Activated CD4-positive, alpha-beta memory T cell treated with anti-CD3 and anti-CD28 coated beads for 36 hours (primary cell): ENCODE measurements at regions of chr7 and their contacts with region 1.

Region 1: DNA sequence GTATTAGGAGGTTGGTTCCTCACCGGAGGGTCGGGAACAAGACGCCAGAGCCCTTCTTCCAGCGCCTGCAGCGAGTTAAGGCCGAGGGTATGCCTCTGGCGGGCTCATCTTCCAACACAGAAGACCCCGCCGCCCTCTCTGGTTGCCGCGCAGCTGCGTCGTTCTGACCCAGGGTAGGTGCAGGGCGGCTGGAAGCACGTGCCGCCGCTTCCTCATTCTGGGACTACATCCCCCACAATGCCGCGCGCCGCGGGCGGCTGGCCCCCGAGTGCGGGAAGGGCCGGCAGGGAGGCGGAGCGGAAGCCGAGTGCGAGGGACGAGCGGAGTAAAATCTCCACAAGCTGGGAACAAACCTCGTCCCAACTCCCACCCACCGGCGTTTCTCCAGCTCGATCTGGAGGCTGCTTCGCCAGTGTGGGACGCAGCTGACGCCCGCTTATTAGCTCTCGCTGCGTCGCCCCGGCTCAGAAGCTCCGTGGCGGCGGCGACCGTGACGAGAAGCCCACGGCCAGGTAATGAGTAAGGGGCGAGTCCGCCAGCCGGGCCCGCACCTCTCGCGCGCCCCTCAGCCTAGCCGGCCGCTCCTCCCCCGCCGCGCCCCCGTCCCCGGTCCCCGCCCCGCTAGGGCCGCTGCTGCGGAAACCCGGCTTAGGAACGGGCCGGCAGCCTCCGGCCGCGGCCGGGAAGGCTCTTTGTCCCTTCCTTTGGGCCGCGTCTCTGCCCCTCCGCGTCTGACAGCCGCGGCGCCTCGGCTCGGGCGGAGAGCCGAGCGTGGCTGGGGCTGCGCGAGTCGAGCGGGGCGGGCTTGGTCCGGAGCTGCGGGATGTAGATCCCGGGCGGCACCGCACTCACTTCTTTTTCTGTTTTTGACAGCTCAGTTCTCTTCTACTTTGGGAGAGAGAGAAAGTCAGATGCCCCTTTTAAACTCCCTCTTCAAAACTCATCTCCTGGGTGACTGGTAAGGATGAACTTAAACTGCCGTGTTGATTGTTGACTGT is at the start of gene CCDC126:
- DNase-seq: peak; percentile 88
- H3K4me3 Mint-ChIP-seq: peak within 1 kb of the TSS; percentile 87
- H3K27ac Mint-ChIP-seq: peak within 1 kb of the TSS; percentile 64
- H3K4me1 Mint-ChIP-seq: peaks cover 61% of the 10 kb centered on the region
- H3K27me3 Mint-ChIP-seq: no peaks in the 10 kb centered on the region
- total RNA-seq, gene CCDC126: 5.2 to 5.7 TPM

Region 2: GRCh38 chr7:22885797-22886261 is 711.6 kb before region 1 on chr7:
- CTCF ChIA-PET with region 1: no interaction called
- POLR2A ChIA-PET with region 1: no interaction called
- intact Hi-C with region 1: loop called (anchors 1 kb)
- DNase-seq: peak; percentile 81
- H3K4me3 Mint-ChIP-seq: peak overlapping the region; percentile 45
- H3K27ac Mint-ChIP-seq: peak overlapping the region; percentile 88
- H3K4me1 Mint-ChIP-seq: peaks cover 39% of the 10 kb centered on the region
- H3K27me3 Mint-ChIP-seq: no peaks in the 10 kb centered on the region

Region 3: DNA sequence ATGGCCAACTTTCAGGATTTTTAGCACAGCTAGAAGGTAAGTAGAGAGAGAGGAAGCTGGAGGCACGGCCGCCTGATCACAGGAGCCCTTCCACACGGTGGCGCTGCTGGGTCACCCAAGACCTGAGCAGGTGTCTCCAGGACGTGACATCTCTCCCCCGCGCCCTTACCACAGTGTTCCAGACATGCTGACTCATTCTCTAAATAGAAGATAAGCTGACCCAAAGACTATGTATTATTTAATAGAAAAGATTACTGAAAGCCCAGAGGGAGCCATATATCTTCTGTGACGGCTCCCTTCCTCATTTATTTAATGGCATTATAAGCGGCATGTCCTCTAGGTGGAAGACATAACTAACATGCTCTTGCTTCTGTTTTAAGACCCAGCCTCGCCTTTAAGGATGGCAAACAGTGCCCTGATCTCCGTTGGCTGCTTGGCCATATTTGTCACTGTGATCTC is 324.2 kb before region 1 on chr7:
- CTCF ChIA-PET with region 1: interaction called, 3 read pairs
- POLR2A ChIA-PET with region 1: no interaction called
- intact Hi-C with region 1: loop called (anchors 1 kb)
- DNase-seq: peak; percentile 93
- H3K4me3 Mint-ChIP-seq: peak overlapping the region; percentile 61
- H3K27ac Mint-ChIP-seq: peak overlapping the region; percentile 20
- H3K4me1 Mint-ChIP-seq: peaks cover 9% of the 10 kb centered on the region
- H3K27me3 Mint-ChIP-seq: peaks cover 3% of the 10 kb centered on the region

Region 4: GRCh38 chr7:23373151-23374004 is 224.0 kb before region 1 on chr7:
- CTCF ChIA-PET with region 1: no interaction called
- POLR2A ChIA-PET with region 1: no interaction called
- intact Hi-C with region 1: loop called (anchors 1 kb)
- DNase-seq: peak; percentile 80
- H3K4me3 Mint-ChIP-seq: peak overlapping the region; percentile 17
- H3K27ac Mint-ChIP-seq: peak overlapping the region; percentile 76
- H3K4me1 Mint-ChIP-seq: peaks cover 46% of the 10 kb centered on the region
- H3K27me3 Mint-ChIP-seq: peaks cover 15% of the 10 kb centered on the region

Region 5: DNA sequence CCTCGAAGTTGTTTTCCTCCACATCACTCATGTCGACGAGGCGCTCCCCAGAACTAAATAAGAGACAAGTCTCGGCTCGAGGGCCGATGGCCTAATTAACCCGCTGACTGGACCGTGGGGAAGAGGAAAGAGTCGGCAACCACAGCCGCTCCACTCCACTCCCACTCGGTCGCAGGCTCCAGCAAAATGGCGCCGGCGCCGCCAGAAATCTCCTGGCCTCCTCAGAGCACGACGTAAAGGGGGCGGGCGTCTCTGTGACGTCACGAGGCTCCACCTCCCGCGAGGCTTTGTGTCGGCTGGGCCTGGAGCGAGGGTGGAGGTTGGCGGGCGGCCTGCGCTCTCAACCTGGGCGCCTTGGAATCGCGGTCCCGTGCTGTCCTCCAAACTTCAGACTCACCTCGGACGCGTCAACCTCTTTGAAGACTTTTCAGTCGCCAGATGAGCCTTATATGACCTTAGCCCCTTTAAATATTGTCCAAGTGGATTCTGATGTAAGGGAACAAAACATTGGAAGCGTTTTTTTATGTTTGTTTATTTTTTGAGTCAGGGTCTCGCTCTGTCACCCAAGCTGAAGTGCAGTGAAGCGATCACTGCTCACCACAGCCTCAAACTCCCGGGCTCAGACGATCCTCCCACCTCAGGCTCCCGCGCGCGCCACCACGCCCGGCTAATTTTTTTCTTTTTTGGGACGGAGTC is 65.5 kb before region 1 on chr7 and contains the start of gene TRA2A:
- CTCF ChIA-PET with region 1: no interaction called
- POLR2A ChIA-PET with region 1: no interaction called
- intact Hi-C with region 1: loop called (anchors 2 kb)
- DNase-seq: peak; percentile 98
- H3K4me3 Mint-ChIP-seq: peak within 1 kb of the TSS; percentile 100
- H3K27ac Mint-ChIP-seq: peak within 1 kb of the TSS; percentile 100
- H3K4me1 Mint-ChIP-seq: peaks cover 38% of the 10 kb centered on the region
- H3K27me3 Mint-ChIP-seq: no peaks in the 10 kb centered on the region
- total RNA-seq, gene TRA2A: 75.4 to 77.8 TPM

Region 6: DNA sequence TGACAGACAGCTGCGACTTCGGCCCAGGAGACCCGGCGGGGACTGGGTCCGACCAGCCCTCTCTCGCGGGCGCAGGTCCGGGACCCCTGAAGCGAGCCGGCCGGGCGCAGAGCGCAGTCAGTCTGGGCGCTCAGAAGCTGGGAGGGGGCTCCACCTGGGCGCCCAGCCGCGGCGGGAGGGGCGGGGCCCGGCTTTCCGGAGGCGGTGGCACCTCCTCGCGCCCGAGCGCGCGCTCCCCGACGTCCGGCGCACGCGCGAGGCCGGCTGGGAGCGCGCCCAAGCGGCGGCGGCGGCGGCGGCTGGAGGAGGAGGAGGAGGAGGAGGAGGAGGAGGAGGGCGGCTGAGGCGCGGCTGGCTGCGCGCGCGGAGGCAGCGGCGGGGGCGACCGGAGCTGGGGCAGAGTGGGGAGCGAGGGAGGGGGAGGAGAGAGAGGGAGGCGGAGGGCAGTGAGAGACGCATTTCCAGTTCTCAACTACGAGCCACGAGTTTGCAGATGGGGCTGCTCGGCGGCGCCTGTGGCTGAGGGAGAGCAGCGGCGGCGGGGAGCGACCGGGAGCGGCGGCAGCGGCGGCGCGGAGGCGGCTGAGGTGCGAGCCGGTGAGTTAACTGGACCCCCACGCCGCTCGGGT is 975.7 kb after region 1 on chr7 and contains the start of gene PALS2:
- CTCF ChIA-PET with region 1: no interaction called
- POLR2A ChIA-PET with region 1: no interaction called
- intact Hi-C with region 1: loop called (anchors 5 kb)
- DNase-seq: peak; percentile 82
- H3K4me3 Mint-ChIP-seq: peak within 1 kb of the TSS; percentile 83
- H3K27ac Mint-ChIP-seq: peak within 1 kb of the TSS; percentile 70
- H3K4me1 Mint-ChIP-seq: peaks cover 28% of the 10 kb centered on the region
- H3K27me3 Mint-ChIP-seq: peaks cover 3% of the 10 kb centered on the region
- total RNA-seq, gene PALS2: 21.0 to 22.9 TPM